Activated CD8-positive, alpha-beta T cell treated with anti-CD3 and anti-CD28 coated beads, Interleukin-2, amount 10 ng/mL, durations not matched to agents 7 days and 5 days (primary cell): ENCODE measurements at regions of chr4 and their contacts with region 1.

Region 1: DNA sequence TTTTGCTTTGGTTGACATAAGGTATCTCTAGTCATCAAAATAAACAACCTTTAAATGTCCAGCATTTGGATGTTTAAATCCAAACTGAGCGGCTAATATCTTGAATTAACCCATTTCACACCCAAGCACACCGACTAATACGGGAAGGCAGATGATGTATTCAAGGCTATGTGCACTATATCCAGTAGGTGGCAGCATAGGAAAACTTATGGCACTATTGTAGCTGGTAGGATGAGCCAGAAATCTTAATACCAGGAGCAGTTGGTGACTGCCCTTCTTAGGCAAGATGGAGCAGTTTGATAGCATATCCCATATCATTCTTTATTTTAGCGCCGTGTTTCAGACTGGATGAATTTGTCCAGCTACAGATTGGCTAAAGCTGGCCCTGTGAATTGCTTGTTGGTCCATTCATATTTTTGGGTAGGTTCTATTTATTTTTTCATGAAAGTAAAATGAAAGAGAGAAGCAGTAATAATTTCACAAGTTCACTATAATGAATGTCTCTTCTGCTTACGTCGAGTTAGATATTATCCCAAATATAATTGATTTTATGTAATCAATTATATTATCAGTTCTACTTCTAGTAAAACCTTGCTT is 24.4 kb downstream of the UCHL1 start:
- DNase-seq: peak; percentile 56
- ATAC-seq: peak; percentile 79
- H3K4me3 Mint-ChIP-seq: no peak overlapping the region
- H3K27ac Mint-ChIP-seq: no peak overlapping the region
- H3K4me1 Mint-ChIP-seq: no peaks in the 10 kb centered on the region
- H3K27me3 Mint-ChIP-seq: no peaks in the 10 kb centered on the region

Region 2: GRCh38 chr4:41009411-41009810 is 271.7 kb before region 1 on chr4:
- CTCF ChIA-PET with region 1: no interaction called
- POLR2A ChIA-PET with region 1: no interaction called
- DNase-seq: no peak
- ATAC-seq: no peak
- H3K4me3 Mint-ChIP-seq: no peak overlapping the region
- H3K27ac Mint-ChIP-seq: no peak overlapping the region
- H3K4me1 Mint-ChIP-seq: no peaks in the 10 kb centered on the region
- H3K27me3 Mint-ChIP-seq: no peaks in the 10 kb centered on the region

Region 3: GRCh38 chr4:41257257-41257901 is 23.8 kb before region 1 on chr4:
- CTCF ChIA-PET with region 1: interaction called, 10 read pairs
- POLR2A ChIA-PET with region 1: no interaction called
- DNase-seq: peak; percentile 24
- ATAC-seq: peak; percentile 58
- H3K4me3 Mint-ChIP-seq: no peak overlapping the region
- H3K27ac Mint-ChIP-seq: no peak overlapping the region
- H3K4me1 Mint-ChIP-seq: peaks cover 5% of the 10 kb centered on the region
- H3K27me3 Mint-ChIP-seq: peaks cover 35% of the 10 kb centered on the region

Region 4: GRCh38 chr4:41661442-41662076 is 380.4 kb after region 1 on chr4:
- CTCF ChIA-PET with region 1: interaction called, 31 read pairs
- POLR2A ChIA-PET with region 1: no interaction called
- DNase-seq: peak; percentile 53
- ATAC-seq: no peak
- H3K4me3 Mint-ChIP-seq: no peak overlapping the region
- H3K27ac Mint-ChIP-seq: no peak overlapping the region
- H3K4me1 Mint-ChIP-seq: no peaks in the 10 kb centered on the region
- H3K27me3 Mint-ChIP-seq: no peaks in the 10 kb centered on the region